ENCODE measurements at regions of chr1 and their contacts with region 1.

Region 1: GRCh38 chr1:174800216-174800851 is 199.4 kb upstream of the CACYBP start:
- DNase-seq: no peak
- ATAC-seq: no peak
- H3K4me3 Mint-ChIP-seq: no peak overlapping the region
- H3K27ac Mint-ChIP-seq: no peak overlapping the region
- H3K4me1 Mint-ChIP-seq: peaks cover 11% of the 10 kb centered on the region
- H3K27me3 Mint-ChIP-seq: no peaks in the 10 kb centered on the region
- CTCF ChIP-seq: no peak

Region 2: DNA sequence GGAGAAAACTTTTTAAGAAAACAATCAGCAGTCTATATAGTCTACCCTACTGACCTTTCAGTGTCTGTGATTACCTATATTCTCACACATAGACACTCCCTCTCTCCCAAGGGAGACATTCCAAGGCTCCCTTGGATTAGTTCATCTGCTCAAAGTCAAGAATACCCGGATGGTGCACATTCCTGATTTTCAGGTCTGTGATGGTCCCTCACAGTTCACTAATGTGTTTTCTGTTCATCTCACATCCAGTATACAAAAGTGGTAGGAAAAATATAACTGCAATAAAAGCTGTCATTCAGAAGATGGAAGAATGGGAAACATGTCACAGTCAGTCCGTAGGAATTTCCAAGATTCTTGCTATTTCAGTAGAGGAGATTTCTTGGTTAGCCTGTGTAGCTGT is 24.7 kb before region 1 on chr1:
- CTCF ChIA-PET with region 1: no interaction called
- POLR2A ChIA-PET with region 1: interaction called, 3 read pairs
- intact Hi-C with region 1: loop called (anchors 2 kb)
- DNase-seq: no peak
- ATAC-seq: no peak
- H3K4me3 Mint-ChIP-seq: no peak overlapping the region
- H3K27ac Mint-ChIP-seq: no peak overlapping the region
- H3K4me1 Mint-ChIP-seq: peaks cover 22% of the 10 kb centered on the region
- H3K27me3 Mint-ChIP-seq: no peaks in the 10 kb centered on the region
- CTCF ChIP-seq: no peak

Region 3: DNA sequence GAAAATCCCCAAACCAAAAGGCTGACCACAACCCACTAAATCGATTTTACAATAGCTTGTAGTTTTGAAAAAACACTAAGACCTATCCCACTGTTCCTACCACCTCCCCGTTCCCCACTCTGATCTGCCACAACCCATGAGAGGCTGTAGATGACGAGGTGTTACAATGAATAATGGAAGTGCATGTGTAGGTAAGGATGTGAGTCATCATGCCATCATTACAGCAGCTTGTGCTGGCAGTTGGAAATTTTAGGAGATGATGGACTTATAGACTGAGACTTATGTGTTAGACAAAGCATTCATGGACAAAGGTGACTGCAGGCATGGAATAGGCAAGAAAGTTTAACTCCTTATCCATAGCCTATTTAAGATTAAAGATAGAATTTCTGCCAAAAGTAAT is 14.7 kb after region 1 on chr1:
- CTCF ChIA-PET with region 1: no interaction called
- POLR2A ChIA-PET with region 1: interaction called, 12 read pairs
- intact Hi-C with region 1: loop called (anchors 2 kb)
- DNase-seq: no peak
- ATAC-seq: peak; percentile 42
- H3K4me3 Mint-ChIP-seq: no peak overlapping the region
- H3K27ac Mint-ChIP-seq: peak overlapping the region; percentile 67
- H3K4me1 Mint-ChIP-seq: peaks cover 31% of the 10 kb centered on the region
- H3K27me3 Mint-ChIP-seq: no peaks in the 10 kb centered on the region
- CTCF ChIP-seq: no peak